PC-3 (cell line): ENCODE measurements at regions of chr5 and their contacts with region 1.

Region 1: GRCh38 chr5:120463991-120464626 is at the start of gene PRR16:
- DNase-seq: peak; percentile 56
- ATAC-seq: peak; percentile 81
- H3K4me3 ChIP-seq: peak within 1 kb of the TSS; percentile 71
- H3K27ac ChIP-seq: no peak within 1 kb of the TSS
- H3K4me1 ChIP-seq: 0 out of 2 replicates have a peak, but pooled peaks cover 4% of the 10 kb centered on the region
- H3K27me3 ChIP-seq: no peaks in the 10 kb centered on the region
- CTCF ChIP-seq: no peak; the same call in 1 of the 2 replicates
- total RNA-seq, gene PRR16: 2.4 and 3.6 TPM in 2 replicates

Region 2: GRCh38 chr5:120614531-120615180 is 150.5 kb after region 1 on chr5:
- CTCF ChIA-PET with region 1: no interaction called
- POLR2A ChIA-PET with region 1: no interaction called
- intact Hi-C with region 1: loop called (anchors 10 kb)
- DNase-seq: no peak
- ATAC-seq: 0 out of 2 replicates have a peak, but pooled peaks have one; percentile 16
- H3K4me3 ChIP-seq: no peak overlapping the region
- H3K27ac ChIP-seq: no peak overlapping the region
- H3K4me1 ChIP-seq: peaks cover 23% of the 10 kb centered on the region
- H3K27me3 ChIP-seq: no peaks in the 10 kb centered on the region
- CTCF ChIP-seq: no peak

Region 3: DNA sequence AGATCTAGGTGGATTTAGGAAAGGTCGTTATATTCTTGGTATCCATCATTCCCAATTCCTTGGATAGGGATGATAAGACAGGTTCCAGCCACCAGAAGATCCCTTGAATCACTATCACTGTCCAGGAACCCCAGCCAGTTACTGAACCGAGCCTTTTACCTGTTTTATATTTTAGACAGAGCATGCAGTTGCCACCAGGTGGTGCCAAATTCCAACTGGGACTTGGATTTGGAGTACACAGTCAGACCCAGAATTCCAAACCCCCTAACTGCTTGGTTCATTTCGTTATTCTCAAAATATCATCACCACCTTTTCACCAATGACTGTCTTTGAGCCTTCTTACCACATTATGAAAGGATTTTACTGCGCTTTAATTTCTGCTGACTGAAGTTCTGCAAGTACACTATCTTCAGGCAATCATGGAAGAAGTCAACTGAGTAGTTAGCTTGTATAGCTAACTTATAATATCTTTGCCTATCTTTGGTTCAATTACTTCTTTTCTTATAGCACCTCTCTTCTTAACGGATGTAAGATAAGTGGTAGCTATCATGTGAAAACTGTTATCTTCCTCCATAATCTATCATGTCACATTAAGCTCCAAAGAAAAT is 191.8 kb after region 1 on chr5:
- CTCF ChIA-PET with region 1: no interaction called
- POLR2A ChIA-PET with region 1: no interaction called
- intact Hi-C with region 1: loop called (anchors 10 kb)
- DNase-seq: peak; percentile 64
- ATAC-seq: peak; percentile 66
- H3K4me3 ChIP-seq: no peak overlapping the region
- H3K27ac ChIP-seq: no peak overlapping the region
- H3K4me1 ChIP-seq: no peaks in the 10 kb centered on the region
- H3K27me3 ChIP-seq: no peaks in the 10 kb centered on the region
- CTCF ChIP-seq: peak; percentile 78

Region 4: DNA sequence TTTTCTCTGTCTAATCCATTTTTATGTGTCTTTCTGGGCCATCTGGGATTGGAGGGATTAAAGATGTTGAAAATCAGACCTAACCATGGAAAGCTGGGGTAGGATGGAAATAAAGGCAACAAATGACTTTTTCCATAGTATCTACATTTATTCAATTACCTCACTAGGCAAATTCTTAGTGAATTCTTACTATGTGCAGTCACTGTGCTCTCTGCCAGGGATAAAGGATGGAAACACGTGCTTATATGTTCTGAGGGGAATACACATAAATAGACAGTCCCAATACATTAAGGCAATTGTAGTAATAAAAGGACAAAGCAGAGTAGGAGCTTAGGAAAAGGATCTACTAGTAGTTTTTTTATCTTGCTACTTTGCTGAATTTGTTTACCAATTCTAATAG is 214.2 kb after region 1 on chr5:
- CTCF ChIA-PET with region 1: no interaction called
- POLR2A ChIA-PET with region 1: interaction called, 19 read pairs
- intact Hi-C with region 1: loop called (anchors 5 kb)
- DNase-seq: no peak
- ATAC-seq: no peak
- H3K4me3 ChIP-seq: no peak overlapping the region
- H3K27ac ChIP-seq: no peak overlapping the region
- H3K4me1 ChIP-seq: peaks cover 24% of the 10 kb centered on the region
- H3K27me3 ChIP-seq: no peaks in the 10 kb centered on the region
- CTCF ChIP-seq: no peak

Region 5: GRCh38 chr5:120684749-120685415 is 220.8 kb after region 1 on chr5:
- CTCF ChIA-PET with region 1: no interaction called
- POLR2A ChIA-PET with region 1: no interaction called
- intact Hi-C with region 1: loop called (anchors 5 kb)
- DNase-seq: no peak
- ATAC-seq: no peak
- H3K4me3 ChIP-seq: no peak overlapping the region
- H3K27ac ChIP-seq: no peak overlapping the region
- H3K4me1 ChIP-seq: peaks cover 33% of the 10 kb centered on the region
- H3K27me3 ChIP-seq: no peaks in the 10 kb centered on the region
- CTCF ChIP-seq: peak; percentile 25; the same call in 1 of the 2 replicates